RWPE1 (cell line): ENCODE measurements at regions of chr1 and their contacts with region 1.

Region 1: DNA sequence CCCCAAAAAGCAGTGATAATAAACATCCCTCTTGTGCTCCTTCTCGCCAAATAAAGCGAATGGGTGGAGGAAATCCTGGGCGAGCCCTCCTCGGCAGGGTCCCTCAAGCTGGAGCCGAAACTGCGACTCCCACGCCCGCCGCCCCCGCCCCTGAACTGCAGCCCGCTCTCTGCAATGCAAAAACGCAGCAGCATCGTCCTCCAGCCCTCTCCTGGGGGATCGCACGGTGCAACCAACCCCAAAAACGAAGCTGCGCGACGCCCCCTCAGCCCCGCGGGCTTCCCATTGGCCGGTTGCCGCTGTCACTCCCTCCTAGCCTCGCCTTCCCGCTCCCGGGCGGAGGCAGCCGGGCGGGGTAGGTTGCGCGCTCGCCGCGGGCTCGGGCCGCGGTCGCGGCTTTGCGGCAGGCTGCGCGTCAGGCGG is at the start of gene TMCC2:
- DNase-seq: peak; percentile 98
- H3K27ac ChIP-seq: peak within 1 kb of the TSS; percentile 78
- CTCF ChIP-seq: no peak

Region 2: GRCh38 chr1:205056188-205056611 is 171.4 kb before region 1 on chr1:
- CTCF ChIA-PET with region 1: no interaction called
- POLR2A ChIA-PET with region 1: no interaction called
- DNase-seq: no peak
- H3K27ac ChIP-seq: no peak overlapping the region
- CTCF ChIP-seq: no peak

Region 3: DNA sequence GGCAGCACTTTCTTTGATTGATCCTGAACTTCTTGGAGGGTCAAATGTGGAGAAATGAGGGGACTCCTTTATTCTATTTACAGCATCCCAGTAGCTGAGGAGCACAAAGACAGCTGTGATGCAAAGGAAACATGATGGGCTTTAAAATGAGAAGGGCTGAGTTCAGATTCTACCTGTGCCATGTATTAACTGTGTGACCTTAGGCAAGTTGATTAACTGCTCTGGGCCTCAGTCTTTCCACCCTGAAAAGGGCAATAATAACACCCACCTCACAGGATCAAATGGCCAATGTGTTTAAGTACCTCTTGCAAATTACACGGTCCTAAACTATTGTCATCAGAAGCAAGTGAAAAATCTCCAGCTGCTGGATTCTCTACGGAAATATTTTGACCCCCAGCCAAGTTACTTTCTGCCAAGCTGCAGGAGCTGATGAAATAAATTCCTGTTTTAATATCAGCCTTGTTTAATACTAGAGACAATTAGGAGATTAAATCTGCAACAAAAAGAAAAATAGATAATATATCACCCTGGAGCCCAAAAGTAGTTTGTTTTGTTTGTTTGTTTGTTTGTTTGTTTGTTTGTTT is 159.0 kb before region 1 on chr1:
- CTCF ChIA-PET with region 1: no interaction called
- POLR2A ChIA-PET with region 1: no interaction called
- DNase-seq: no peak
- H3K27ac ChIP-seq: no peak overlapping the region
- CTCF ChIP-seq: no peak

Region 4: DNA sequence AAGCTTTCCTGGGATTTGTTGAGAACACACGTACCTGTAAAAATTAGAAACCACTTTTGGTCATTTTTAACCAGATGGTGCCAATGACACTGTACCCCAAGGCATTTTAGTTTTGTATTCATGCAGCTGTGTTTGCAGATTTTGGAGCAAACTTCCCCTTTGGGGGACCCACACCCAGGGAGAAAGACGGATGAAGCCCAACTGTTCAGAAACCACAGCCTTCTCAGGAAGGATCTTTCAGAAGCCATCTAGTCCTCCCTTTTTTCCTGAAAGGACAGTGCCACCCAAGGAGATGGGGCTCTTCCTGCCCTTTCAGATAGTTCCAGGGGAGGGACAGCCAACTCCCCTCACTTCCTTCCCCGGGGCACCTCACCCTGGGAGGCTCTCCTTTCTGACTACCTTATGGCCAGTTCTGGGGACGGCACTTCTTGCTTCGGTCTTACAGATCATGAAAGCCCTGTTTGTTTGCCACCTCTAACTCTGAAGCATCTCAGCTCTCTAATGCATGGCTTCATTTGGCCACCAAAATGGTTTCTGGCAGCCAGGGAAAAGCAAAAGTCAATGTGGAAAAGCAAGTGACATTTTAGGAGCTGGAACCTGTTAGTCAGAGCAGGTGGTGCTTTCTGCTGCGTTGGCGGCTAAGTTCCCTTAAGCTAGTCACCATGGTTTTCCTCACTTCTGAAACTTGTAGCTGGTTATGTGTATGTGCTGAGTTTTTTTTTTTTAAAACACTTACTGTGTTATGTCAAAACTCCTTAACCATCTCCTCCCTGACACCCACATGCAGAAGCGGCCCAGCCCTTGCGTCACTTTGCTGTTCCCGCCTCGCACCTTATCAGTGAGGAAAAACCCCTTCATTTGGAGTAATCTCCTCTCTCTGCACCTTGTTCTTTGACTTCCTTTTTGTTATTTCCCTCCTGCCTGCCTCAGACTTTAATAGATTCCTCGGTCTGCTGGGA is 10.2 kb after region 1 on chr1:
- CTCF ChIA-PET with region 1: interaction called, 10 read pairs
- POLR2A ChIA-PET with region 1: no interaction called
- DNase-seq: no peak
- H3K27ac ChIP-seq: no peak overlapping the region
- CTCF ChIP-seq: no peak

Region 5: GRCh38 chr1:205247130-205247921 is 19.7 kb after region 1 on chr1:
- CTCF ChIA-PET with region 1: interaction called, 19 read pairs
- POLR2A ChIA-PET with region 1: no interaction called
- DNase-seq: no peak
- H3K27ac ChIP-seq: no peak overlapping the region
- CTCF ChIP-seq: no peak

Region 6: GRCh38 chr1:205344066-205344928 is 116.7 kb after region 1 on chr1:
- CTCF ChIA-PET with region 1: no interaction called
- POLR2A ChIA-PET with region 1: no interaction called
- DNase-seq: no peak
- H3K27ac ChIP-seq: no peak overlapping the region
- CTCF ChIP-seq: no peak